ENCODE measurements at regions of chr11 and their contacts with region 1.

Region 1: DNA sequence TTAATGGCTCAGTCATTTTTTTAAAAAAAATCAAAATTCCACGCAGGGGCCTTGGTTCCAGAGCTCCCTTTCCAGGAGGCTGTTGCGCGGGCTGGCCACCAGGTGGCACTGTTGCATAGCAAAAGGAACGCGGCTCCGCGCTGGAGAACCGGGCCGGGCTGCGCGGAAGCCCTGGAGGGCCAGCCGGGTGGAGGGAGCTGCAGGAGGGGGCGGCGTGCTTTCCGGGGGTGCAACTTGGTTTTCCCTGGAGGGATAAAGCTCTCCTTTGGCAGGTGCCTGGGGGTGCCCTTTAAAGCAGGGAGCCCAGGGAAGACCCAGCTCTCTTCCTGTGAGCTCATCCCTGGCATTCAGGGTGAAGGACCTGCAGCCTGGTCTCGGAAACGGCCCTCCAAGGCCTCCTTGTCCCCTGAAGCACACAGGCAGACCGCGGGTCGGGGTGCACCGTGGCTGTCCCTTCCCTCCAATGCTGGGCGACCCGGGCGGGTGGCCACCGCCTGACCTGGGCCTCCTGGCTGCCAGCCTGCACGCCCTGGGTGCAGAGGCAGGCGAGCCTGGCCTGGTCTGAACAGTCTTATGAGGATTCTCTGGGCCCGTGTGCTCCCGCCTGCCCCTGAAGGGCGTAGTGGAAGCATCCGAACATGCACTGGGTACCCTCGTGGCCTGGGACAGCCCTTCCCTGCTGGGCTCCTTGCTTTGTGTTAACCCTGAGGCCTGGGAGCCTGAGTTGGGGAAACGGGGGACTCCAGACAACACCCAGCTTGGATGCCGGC is 23.4 kb downstream of the KRTAP5-5 start:
- DNase-seq: peak; percentile 51 to 89
- ATAC-seq: peak; percentile 79 to 93
- H3K4me3 ChIP-seq: no peak overlapping the region
- H3K27ac ChIP-seq: peak overlapping the region in 1 of 2 experiments; percentile 26; a peak in 2 of 6 replicates
- H3K4me1 ChIP-seq: no peaks in the 10 kb centered on the region; the same call in 2 of the 3 replicates
- CTCF ChIP-seq: peak; percentile 93
- EP300 ChIP-seq: no peak
- POLR2A ChIP-seq: no peak
- RAD21 ChIP-seq: peak; percentile 94 to 97

Region 2: DNA sequence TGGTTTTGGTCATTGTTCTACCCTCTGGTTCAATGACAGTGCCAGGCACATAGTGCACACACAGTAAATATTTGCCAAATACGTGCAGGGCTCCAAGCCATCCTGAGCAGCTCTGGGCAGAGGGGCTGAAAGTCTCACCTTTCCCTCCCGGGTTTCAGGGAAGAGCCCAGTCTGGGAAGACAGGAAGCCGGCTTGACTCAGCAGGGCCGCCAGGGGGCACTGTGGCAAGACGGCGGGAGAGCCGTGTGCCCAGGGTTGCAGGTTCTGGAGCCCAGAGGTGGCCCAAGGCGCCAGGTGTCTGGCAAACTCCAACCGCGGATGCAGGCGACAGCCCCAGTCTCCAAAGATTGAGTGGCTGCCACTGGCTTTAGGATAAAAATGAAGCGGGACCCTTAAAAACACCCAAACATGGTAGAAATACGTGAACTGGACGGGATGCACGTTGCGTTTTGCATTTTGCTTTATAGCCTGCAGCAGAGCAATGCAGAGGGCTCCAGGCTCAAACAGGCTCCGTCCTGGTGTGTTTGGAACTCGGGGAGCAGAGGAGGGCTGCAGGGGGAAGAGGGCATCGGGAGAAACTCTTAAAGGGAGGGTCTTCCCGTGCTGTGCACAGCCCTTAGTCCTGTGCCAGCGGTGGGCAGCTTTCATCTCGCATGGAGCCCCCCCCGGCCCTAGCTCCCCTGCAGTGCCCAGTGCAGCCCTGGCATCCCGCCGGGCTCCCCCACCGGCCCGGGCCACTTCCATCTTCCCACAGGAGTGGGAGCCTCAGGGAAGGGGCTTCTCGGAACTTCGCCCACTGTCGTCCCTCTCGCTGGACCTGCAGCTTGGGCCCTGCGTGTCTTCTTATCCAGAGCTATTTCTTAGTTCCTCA is 12.6 kb before region 1 on chr11:
- CTCF ChIA-PET with region 1: interaction called, 57 read pairs
- POLR2A ChIA-PET with region 1: no interaction called
- DNase-seq: peak; percentile 50 to 74
- ATAC-seq: peak; percentile 71 to 95
- H3K4me3 ChIP-seq: no peak overlapping the region
- H3K27ac ChIP-seq: no peak overlapping the region
- H3K4me1 ChIP-seq: no peaks in the 10 kb centered on the region
- CTCF ChIP-seq: peak; percentile 73
- EP300 ChIP-seq: no peak
- POLR2A ChIP-seq: no peak
- RAD21 ChIP-seq: peak; percentile 18; a peak in 1 of 5 replicates

Region 3: DNA sequence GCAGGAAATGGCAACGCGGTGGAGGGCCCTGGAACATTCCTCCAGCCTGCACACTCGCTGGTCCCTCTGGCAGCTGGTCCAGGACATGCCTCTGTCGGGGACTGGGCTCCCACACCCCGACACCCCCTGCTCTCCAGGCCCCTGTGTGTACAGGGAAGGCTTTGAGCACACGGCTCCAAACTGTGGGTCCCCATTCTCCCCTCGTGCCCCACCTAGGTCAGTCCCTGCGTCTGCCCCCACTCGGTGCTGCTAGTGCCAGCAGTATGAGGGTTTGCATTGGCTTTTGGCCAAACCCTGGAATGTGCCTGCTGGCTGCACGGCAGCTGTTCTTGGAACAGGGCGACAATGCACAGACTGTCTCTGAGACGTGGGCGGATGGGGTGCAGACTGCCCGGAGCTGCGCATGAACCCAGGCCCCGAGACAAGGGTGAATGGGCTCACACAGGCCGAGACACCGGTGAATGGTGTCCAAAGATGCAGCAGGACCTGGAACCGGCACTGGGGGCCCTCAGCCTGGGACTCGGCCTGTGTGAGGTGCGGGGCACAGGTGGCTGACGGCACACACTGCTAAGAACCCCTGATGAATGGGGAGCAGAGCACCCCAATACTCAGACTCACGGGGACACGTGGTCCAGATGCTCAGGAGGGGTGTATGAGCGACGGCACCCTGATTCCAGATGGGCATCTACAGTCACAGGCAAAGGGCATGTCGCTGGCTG is 174.3 kb after region 1 on chr11:
- CTCF ChIA-PET with region 1: interaction called, 108 read pairs
- POLR2A ChIA-PET with region 1: no interaction called
- DNase-seq: peak; percentile 41 to 55
- ATAC-seq: peak; percentile 14 to 16; a peak in 3 of 6 replicates
- H3K4me3 ChIP-seq: no peak overlapping the region
- H3K27ac ChIP-seq: peak overlapping the region; percentile 73 to 87
- H3K4me1 ChIP-seq: peaks cover 64% of the 10 kb centered on the region
- CTCF ChIP-seq: no peak
- EP300 ChIP-seq: no peak
- POLR2A ChIP-seq: no peak
- RAD21 ChIP-seq: no peak

Region 4: DNA sequence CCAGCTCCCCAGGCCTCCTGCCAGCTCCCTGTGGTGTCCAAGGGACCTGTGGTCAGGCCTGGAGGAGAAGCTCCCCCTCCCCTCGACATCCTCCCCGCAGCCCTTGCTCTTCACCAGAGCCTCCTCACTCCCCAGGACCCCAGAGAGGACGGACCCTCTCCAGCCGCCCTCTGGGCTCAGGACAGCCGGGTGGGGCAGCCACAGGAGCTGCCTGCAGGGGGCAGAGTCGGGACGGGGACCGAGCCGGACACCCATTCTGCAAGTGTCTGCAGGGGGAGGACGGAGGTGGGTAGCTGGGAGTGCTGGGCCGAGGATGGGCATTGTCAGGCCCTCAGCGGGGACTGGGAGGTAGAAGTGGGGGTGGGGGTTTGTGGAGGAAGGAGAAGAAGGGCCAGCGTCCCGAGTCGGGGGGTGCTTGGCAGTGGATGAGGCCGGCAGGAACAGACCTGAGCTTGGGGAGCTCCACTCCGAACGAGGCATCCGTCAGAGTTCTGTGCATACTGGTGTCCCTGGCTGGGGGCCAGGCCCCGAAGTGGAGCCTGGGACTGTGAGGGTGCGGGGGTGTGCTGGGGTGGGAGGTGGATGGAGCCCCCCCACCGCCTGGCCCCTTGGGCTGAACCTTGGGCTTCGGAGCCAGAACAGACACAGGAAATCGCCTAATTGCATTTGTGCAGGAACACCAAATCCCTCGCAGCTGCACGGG is 223.6 kb after region 1 on chr11:
- CTCF ChIA-PET with region 1: interaction called, 24 read pairs
- POLR2A ChIA-PET with region 1: no interaction called
- DNase-seq: peak; percentile 48 to 80
- ATAC-seq: peak; percentile 57 to 79; a peak in 4 of 6 replicates
- H3K4me3 ChIP-seq: no peak overlapping the region
- H3K27ac ChIP-seq: peak overlapping the region in 1 of 2 experiments; percentile 65; a peak in 3 of 6 replicates
- H3K4me1 ChIP-seq: peaks cover 19% of the 10 kb centered on the region; the same call in 2 of the 3 replicates
- CTCF ChIP-seq: peak; percentile 61
- EP300 ChIP-seq: no peak
- POLR2A ChIP-seq: no peak
- RAD21 ChIP-seq: peak; percentile 40 to 44; a peak in 4 of 5 replicates

Region 5: DNA sequence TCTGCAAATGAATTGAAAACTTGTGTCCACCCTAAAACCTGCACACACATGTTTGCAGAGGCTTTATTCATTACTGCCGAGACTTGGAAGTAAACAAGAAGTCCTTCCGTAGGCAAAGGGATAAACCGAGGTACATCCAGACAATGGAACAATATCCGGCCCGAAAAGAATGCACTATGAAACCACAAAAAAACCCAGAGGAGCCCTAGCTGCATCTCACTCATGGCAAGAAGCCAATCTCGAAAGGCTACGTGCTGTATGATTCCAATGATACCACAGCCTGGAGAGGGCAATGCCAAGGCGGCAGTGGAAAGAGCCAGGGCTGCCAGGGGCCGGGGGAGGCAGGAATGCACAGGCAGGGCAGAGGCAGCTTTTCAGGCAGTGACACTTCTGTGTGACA is 291.0 kb after region 1 on chr11:
- CTCF ChIA-PET with region 1: interaction called, 21 read pairs
- POLR2A ChIA-PET with region 1: no interaction called
- DNase-seq: no peak
- ATAC-seq: no peak; a peak in 1 of 6 replicates
- H3K4me3 ChIP-seq: no peak overlapping the region
- H3K27ac ChIP-seq: no peak overlapping the region
- H3K4me1 ChIP-seq: no peaks in the 10 kb centered on the region
- CTCF ChIP-seq: no peak
- EP300 ChIP-seq: no peak
- POLR2A ChIP-seq: no peak
- RAD21 ChIP-seq: no peak

Region 6: GRCh38 chr11:2002807-2003206 is 349.9 kb after region 1 on chr11:
- CTCF ChIA-PET with region 1: interaction called, 49 read pairs
- POLR2A ChIA-PET with region 1: no interaction called
- DNase-seq: no peak
- ATAC-seq: peak; percentile 49 to 72; a peak in 4 of 6 replicates
- H3K4me3 ChIP-seq: no peak overlapping the region
- H3K27ac ChIP-seq: no peak overlapping the region
- H3K4me1 ChIP-seq: no peaks in the 10 kb centered on the region
- CTCF ChIP-seq: no peak
- EP300 ChIP-seq: no peak
- POLR2A ChIP-seq: no peak
- RAD21 ChIP-seq: no peak

Measured in A549 (cell line).